Right cardiac atrium (tissue), 5 donors: ENCODE measurements at regions of chr13 and their contacts with region 1.

Region 1: GRCh38 chr13:79480954-79481684 is at the start of gene NDFIP2:
- DNase-seq: peak; percentile 91 to 96 (median 94)
- ATAC-seq: peak; percentile 97 to 98
- H3K4me3 ChIP-seq: peak within 1 kb of the TSS; percentile 84
- H3K27ac ChIP-seq: peak within 1 kb of the TSS; percentile 56
- H3K4me1 ChIP-seq: no peaks in the 10 kb centered on the region
- H3K27me3 ChIP-seq: no peaks in the 10 kb centered on the region
- total RNA-seq, gene NDFIP2: 37.6 to 48.7 (median 41.6) TPM

Region 2: GRCh38 chr13:79413521-79413920 is 67.6 kb before region 1 on chr13:
- intact Hi-C with region 1: loop called in 1 of 4 experiments (anchors 10 kb)
- DNase-seq: no peak
- ATAC-seq: no peak
- H3K4me3 ChIP-seq: no peak overlapping the region
- H3K27ac ChIP-seq: no peak overlapping the region
- H3K4me1 ChIP-seq: no peaks in the 10 kb centered on the region
- H3K27me3 ChIP-seq: no peaks in the 10 kb centered on the region

Region 3: GRCh38 chr13:79533781-79534400 is 52.8 kb after region 1 on chr13:
- intact Hi-C with region 1: loop called (anchors 5 to 10 kb)
- DNase-seq: no peak
- ATAC-seq: no peak
- H3K4me3 ChIP-seq: no peak overlapping the region
- H3K27ac ChIP-seq: no peak overlapping the region
- H3K4me1 ChIP-seq: peaks cover 2% of the 10 kb centered on the region
- H3K27me3 ChIP-seq: no peaks in the 10 kb centered on the region